CD8-positive, alpha-beta T cell (primary cell): ENCODE measurements at regions of chr12 and their contacts with region 1.

Region 1: GRCh38 chr12:116142936-116143898 is 134.3 kb downstream of the MED13L start:
- DNase-seq: peak in 1 of 9 experiments; percentile 29
- ATAC-seq: peak; percentile 34
- H3K4me3 ChIP-seq: no peak overlapping the region
- H3K4me3 Mint-ChIP-seq: peak overlapping the region; percentile 22
- H3K27ac ChIP-seq: no peak overlapping the region
- H3K27ac Mint-ChIP-seq: peak overlapping the region; percentile 74
- H3K4me1 ChIP-seq: peaks cover 9% of the 10 kb centered on the region
- H3K4me1 Mint-ChIP-seq: peaks cover 56% of the 10 kb centered on the region
- H3K27me3 ChIP-seq: no peaks in the 10 kb centered on the region
- H3K27me3 Mint-ChIP-seq: no peaks in the 10 kb centered on the region
- CTCF ChIP-seq: no peak

Region 2: GRCh38 chr12:116186482-116187150 is 43.4 kb after region 1 on chr12:
- CTCF ChIA-PET with region 1: no interaction called
- POLR2A ChIA-PET with region 1: no interaction called
- intact Hi-C with region 1: loop called (anchors 5 kb)
- DNase-seq: no peak
- ATAC-seq: no peak
- H3K4me3 ChIP-seq: no peak overlapping the region
- H3K4me3 Mint-ChIP-seq: no peak overlapping the region
- H3K27ac ChIP-seq: no peak overlapping the region
- H3K27ac Mint-ChIP-seq: peak overlapping the region; percentile 8
- H3K4me1 ChIP-seq: peaks cover 40% of the 10 kb centered on the region
- H3K4me1 Mint-ChIP-seq: peaks cover 79% of the 10 kb centered on the region
- H3K27me3 ChIP-seq: no peaks in the 10 kb centered on the region
- H3K27me3 Mint-ChIP-seq: no peaks in the 10 kb centered on the region
- CTCF ChIP-seq: no peak